Prostate gland (tissue), 2 donors: ENCODE measurements at regions of chr18 and their contacts with region 1.

Region 1: DNA sequence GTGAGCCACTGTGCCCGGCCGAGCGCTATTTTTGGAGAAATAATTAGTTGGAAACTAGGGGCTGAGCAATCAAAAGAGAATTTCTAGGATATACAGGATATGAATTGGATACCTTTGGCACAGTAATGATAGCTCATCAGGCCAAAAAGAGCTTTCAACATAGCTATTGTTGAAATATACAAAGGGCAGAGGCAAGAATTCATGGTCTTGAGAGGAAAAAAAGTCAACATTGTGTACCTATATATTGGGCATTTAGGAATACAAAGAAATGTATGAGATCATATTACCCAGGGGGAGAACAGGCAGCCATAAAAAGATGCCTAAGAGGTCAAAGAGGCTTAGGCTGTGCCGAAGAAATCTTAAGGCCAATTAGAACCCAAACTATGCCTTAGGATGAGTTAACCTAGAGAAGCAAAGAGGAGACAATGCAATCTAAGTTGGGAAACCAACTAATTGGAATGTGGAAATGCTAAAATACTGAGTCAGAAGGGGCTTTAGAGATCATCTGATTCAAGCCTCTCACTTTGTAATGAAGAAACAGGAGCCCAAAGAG is 99.0 kb downstream of the RBBP8 start:
- DNase-seq: no peak
- H3K4me3 ChIP-seq: no peak overlapping the region
- H3K27ac ChIP-seq: no peak overlapping the region
- H3K4me1 ChIP-seq: no peaks in the 10 kb centered on the region
- H3K27me3 ChIP-seq: no peaks in the 10 kb centered on the region
- CTCF ChIP-seq: no peak
- POLR2A ChIP-seq: no peak

Region 2: GRCh38 chr18:23377669-23378301 is 345.7 kb after region 1 on chr18:
- intact Hi-C with region 1: loop called (anchors 10 kb)
- DNase-seq: no peak
- H3K4me3 ChIP-seq: no peak overlapping the region
- H3K27ac ChIP-seq: peak overlapping the region in 1 of 2 donors; percentile 9
- H3K4me1 ChIP-seq: no peaks in the 10 kb centered on the region
- H3K27me3 ChIP-seq: no peaks in the 10 kb centered on the region
- CTCF ChIP-seq: no peak
- POLR2A ChIP-seq: no peak

Region 3: DNA sequence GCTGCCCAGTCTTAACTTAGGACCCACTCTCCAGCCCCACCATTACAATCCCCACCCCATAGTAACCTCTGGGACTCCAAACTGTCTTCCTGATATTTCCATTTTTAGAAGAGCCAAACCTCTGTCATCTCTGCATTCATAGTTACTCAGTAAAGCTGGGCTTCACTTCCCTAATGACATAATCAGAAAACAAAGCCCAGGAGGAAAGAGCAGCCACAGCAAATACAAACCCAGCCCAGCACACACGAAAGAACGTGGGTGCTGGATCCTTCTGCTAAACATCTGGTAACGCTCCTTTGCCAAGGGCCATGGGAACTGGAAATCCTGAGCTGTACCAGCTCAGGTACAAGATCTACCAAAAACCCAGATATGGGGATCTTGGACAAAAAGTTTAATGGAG is 384.2 kb after region 1 on chr18:
- intact Hi-C with region 1: loop called (anchors 5 kb)
- DNase-seq: no peak
- H3K4me3 ChIP-seq: no peak overlapping the region
- H3K27ac ChIP-seq: no peak overlapping the region
- H3K4me1 ChIP-seq: no peaks in the 10 kb centered on the region
- H3K27me3 ChIP-seq: no peaks in the 10 kb centered on the region
- CTCF ChIP-seq: no peak
- POLR2A ChIP-seq: no peak